ENCODE measurements at regions of chrX and their contacts with region 1.

Region 1: GRCh38 chrX:120120223-120120622 is 4.5 kb upstream of the RHOXF1 start:
- DNase-seq: peak; percentile 0
- ATAC-seq: peak; percentile 57
- H3K4me3 ChIP-seq: no peak overlapping the region
- H3K27ac ChIP-seq: no peak overlapping the region
- H3K4me1 ChIP-seq: no peaks in the 10 kb centered on the region
- H3K27me3 ChIP-seq: no peaks in the 10 kb centered on the region; the same call in 1 of the 2 replicates
- CTCF ChIP-seq: no peak
- POLR2A ChIP-seq: no peak
- RAD21 ChIP-seq: no peak

Region 2: GRCh38 chrX:120244735-120245498 is 124.7 kb after region 1 on chrX:
- CTCF ChIA-PET with region 1: no interaction called
- POLR2A ChIA-PET with region 1: no interaction called
- dilution Hi-C with region 1: no loop called
- in situ Hi-C with region 1: loop called (anchors 25 kb)
- intact Hi-C with region 1: no loop called
- DNase-seq: peak; percentile 71
- ATAC-seq: peak; percentile 80
- H3K4me3 ChIP-seq: peak overlapping the region; percentile 67
- H3K27ac ChIP-seq: peak overlapping the region; percentile 18; the same call in 1 of the 2 replicates
- H3K4me1 ChIP-seq: no peaks in the 10 kb centered on the region
- H3K27me3 ChIP-seq: 0 out of 2 replicates have a peak, but pooled peaks cover 2% of the 10 kb centered on the region
- CTCF ChIP-seq: no peak
- POLR2A ChIP-seq: no peak
- RAD21 ChIP-seq: no peak